Posterior vena cava (tissue), 2 donors: ENCODE measurements at regions of chr6 and their contacts with region 1.

Region 1: GRCh38 chr6:168956884-168957730 is 296.5 kb downstream of the THBS2 start:
- DNase-seq: peak; percentile 90

Region 2: GRCh38 chr6:168895102-168895812 is 61.9 kb before region 1 on chr6:
- intact Hi-C with region 1: no loop called
- DNase-seq: peak; percentile 92

Region 3: GRCh38 chr6:169145991-169146501 is 188.9 kb after region 1 on chr6:
- intact Hi-C with region 1: no loop called
- DNase-seq: no peak

Region 4: GRCh38 chr6:169640351-169640852 is 683.3 kb after region 1 on chr6:
- intact Hi-C with region 1: loop called in 1 of 2 experiments (anchors 10 kb)
- DNase-seq: no peak